AG04450 (cell line): ENCODE measurements at regions of chr5 and their contacts with region 1.

Region 1: DNA sequence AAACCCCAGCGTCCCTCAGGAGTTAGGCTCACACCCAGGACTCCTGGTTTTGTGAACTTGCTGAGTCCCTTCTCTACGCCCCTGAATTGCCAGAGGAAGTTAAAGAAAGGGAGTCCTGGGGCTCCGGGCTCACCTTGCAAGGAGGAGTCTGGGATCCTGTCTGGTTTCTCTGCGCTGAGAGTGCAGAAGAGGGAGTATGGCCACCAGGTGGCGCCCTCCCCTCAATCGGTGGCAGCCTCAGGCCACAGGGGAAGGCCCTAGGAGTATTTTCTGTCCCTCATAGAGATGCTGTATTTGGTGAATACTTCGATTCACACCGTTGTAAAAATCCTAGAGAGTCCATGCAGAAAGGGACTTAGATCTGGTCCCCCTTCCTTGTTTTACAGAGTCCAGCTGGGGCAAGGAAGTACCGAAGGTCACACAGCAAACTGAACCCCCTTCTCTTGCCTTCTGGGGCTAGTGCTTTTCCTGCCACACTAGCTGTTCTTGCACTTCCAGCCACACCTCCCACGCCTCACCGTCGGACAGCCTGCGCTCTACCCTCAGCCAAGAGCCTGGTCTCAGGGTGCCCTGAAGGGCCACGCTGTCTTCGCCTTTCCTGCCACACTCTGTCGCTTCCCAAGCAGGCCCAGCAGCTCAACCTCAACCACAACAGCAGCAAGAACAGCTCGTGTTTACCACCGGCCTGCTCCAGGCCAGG is 10.2 kb downstream of the HAND1 start:
- DNase-seq: no peak
- H3K4me3 ChIP-seq: no peak overlapping the region
- H3K27ac ChIP-seq: no peak overlapping the region
- H3K27me3 ChIP-seq: peaks cover 38% of the 10 kb centered on the region
- CTCF ChIP-seq: peak; percentile 92

Region 2: GRCh38 chr5:154260224-154260927 is 207.4 kb before region 1 on chr5:
- CTCF ChIA-PET with region 1: no interaction called
- POLR2A ChIA-PET with region 1: no interaction called
- DNase-seq: no peak
- H3K4me3 ChIP-seq: no peak overlapping the region
- H3K27ac ChIP-seq: no peak overlapping the region
- H3K27me3 ChIP-seq: no peaks in the 10 kb centered on the region
- CTCF ChIP-seq: no peak

Region 3: GRCh38 chr5:154509784-154510555 is 42.2 kb after region 1 on chr5:
- CTCF ChIA-PET with region 1: no interaction called
- POLR2A ChIA-PET with region 1: no interaction called
- DNase-seq: no peak
- H3K4me3 ChIP-seq: no peak overlapping the region
- H3K27ac ChIP-seq: no peak overlapping the region
- H3K27me3 ChIP-seq: peaks cover 30% of the 10 kb centered on the region
- CTCF ChIP-seq: no peak

Region 4: DNA sequence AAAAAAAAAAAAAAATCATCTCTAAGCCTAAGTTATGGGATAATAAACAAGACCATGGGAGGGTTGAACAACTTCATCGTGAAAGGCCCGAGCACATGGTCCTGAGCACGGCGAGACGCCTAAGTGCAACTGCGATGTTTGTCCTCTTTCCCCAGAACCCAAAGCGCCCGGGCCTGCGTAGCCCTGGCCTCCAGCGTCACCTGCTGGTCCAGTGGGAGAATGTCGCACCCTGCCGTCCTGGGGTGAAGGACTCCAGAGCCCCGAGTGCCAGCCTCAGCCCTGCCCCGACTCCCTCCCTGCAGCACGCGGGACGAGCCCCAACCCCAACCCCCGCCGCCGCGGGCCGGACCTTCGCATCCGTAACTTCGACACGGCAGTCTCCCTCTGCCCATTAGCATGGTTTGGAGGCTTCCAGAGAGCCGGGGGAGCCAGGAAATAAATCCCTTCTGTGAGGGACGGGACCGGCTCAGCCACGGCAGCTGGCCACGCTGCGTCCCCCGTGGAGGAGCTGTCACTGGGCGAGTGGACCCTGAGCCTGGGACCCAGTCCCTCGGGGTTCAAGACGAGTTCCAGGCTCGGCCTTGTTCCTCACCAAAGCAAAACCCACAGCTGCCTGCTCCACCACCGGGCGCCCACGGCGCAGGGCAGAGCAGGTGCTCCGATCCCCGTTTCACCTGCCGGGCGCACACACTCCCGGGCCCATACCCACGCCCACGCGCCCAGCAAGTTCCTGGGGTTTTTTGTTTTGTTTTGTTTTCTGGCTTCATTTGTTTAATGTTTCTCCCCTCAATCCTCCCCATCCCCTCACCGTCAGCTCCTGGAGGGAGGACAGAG is 142.7 kb after region 1 on chr5:
- CTCF ChIA-PET with region 1: interaction called, 70 read pairs
- POLR2A ChIA-PET with region 1: no interaction called
- DNase-seq: peak; percentile 24
- H3K4me3 ChIP-seq: peak overlapping the region; percentile 31
- H3K27ac ChIP-seq: no peak overlapping the region
- H3K27me3 ChIP-seq: peaks cover 59% of the 10 kb centered on the region
- CTCF ChIP-seq: peak; percentile 87

Region 5: GRCh38 chr5:154714266-154714986 is 246.6 kb after region 1 on chr5:
- CTCF ChIA-PET with region 1: no interaction called
- POLR2A ChIA-PET with region 1: no interaction called
- DNase-seq: peak; percentile 21
- H3K4me3 ChIP-seq: no peak overlapping the region
- H3K27ac ChIP-seq: peak overlapping the region; percentile 76
- H3K27me3 ChIP-seq: no peaks in the 10 kb centered on the region
- CTCF ChIP-seq: no peak